Dorsolateral prefrontal cortex (tissue), 120 donors: ENCODE measurements at regions of chr6 and their contacts with region 1.

Region 1: GRCh38 chr6:30102970-30103874 is 9.7 kb downstream of the TRIM31 start:
- DNase-seq: peak; percentile 72 to 91 (median 82)
- H3K4me3 ChIP-seq: peak overlapping the region; percentile 14 to 70 (median 44)
- H3K27ac ChIP-seq: peak overlapping the region in 33 of 59 donors; percentile 8 to 70 (median 50)
- H3K27me3 ChIP-seq: peaks cover 3 to 91% (median 55%) of the 10 kb centered on the region in 45 donors
- CTCF ChIP-seq: peak; percentile 47 to 94 (median 88)

Region 2: DNA sequence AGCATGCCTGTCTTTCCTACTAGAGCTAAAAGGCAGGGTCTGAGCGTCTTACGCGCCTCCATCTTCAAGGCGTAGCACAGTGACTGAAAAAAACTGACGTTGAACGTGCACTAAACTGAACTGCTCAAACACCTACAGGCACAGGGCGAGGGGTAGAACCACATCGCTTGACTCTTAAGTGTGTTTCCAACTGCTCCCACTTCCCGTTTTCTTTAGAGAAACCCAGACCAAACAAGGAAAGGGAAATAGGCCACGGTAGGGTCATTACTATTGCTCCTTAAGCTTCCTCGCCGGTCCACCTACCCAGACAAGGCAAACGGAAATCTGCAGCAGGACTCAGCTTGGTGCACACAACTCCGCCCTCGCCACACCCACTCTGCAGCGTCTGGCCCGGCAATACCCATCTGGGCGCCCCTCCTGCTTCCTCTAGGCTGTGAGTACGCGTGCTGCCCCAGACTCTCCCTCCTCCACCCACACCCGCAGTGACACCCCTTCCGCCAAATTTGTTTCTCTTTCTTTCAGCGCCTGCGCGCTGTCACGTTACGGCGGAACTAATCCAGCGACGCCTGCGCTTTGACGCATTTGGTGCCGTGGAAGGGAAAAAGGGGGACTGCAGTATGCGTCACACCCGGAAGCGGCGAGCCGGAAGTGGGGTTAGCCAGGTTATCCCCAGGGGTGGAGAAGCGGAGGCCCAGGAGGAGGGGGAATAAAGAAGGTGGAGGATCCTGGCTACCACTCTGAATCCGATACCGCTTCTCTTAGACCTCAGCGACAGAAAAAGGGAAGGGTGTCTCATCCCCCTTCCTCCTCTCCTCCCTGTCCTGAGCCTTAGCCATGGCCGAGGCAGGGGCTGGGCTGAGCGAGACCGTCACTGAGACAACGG is 36.4 kb before region 1 on chr6 and contains the start of gene PPP1R11:
- intact Hi-C with region 1: loop called in 1 of 2 experiments (anchors 2 kb)
- DNase-seq: peak; percentile 97 to 99 (median 98)
- H3K4me3 ChIP-seq: peak within 1 kb of the TSS; percentile 53 to 98 (median 82)
- H3K27ac ChIP-seq: peak within 1 kb of the TSS; percentile 69 to 95 (median 90)
- H3K27me3 ChIP-seq: peaks cover 0 to 14% (median 0%) of the 10 kb centered on the region in 45 donors
- CTCF ChIP-seq: peak in 24 of 56 donors; percentile 0 to 55 (median 26)
- total RNA-seq, gene PPP1R11: 44.4 to 86.3 (median 63.9) TPM

Region 3: DNA sequence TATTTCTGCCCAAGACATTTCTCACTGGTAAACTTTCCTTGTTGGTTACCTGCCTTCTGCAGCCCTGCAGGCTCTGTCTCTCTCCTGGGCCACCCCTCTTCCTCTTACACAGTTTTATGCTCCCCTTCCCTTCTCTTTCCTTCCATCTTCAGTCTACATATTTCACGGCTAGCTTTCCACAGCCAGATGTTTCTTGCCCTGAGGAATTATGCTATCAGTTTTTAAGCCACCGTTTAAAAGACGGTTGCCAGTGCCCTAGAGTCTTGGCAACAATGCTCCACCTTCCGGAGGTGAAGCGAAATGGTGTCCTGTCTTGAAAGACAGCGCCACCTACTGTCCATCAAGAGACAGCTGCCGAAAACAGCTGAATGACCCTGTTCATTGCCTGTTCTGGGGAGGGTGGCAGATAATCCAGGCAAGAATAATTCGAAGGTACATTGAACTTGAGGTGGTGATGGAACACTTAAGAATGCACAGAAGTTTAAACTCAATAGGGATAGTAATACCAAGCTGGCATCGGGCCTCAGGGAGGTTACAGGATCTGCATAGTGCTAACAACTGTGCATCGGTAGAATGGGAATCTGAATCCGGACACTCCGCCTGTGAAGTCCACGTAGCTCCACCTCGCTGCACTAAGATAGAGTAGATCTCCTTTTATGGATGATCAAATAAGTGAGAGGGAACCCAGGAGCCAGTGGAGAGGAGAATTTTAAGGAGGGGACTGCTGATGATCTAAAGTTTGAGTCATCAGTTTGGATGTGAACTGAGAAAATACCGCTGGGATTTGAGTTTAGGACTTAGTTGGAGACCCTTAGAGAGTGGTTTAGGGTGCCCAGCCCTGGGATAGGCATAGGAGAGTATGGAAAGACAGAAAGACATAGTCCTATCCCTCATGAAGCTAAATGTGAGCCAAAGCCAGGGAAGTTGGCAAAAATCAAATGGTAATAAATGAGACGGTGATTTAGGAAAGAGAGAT is 28.0 kb after region 1 on chr6:
- intact Hi-C with region 1: loop called (anchors 1 kb)
- DNase-seq: peak in 8 of 10 donors; percentile 44 to 67 (median 54)
- H3K4me3 ChIP-seq: no peak overlapping the region
- H3K27ac ChIP-seq: no peak overlapping the region
- H3K27me3 ChIP-seq: peaks cover 0 to 90% (median 68%) of the 10 kb centered on the region in 45 donors
- CTCF ChIP-seq: peak; percentile 82 to 99 (median 97)

Region 4: GRCh38 chr6:30169658-30170614 is 66.7 kb after region 1 on chr6:
- intact Hi-C with region 1: loop called in 1 of 2 experiments (anchors 5 kb)
- DNase-seq: no peak
- H3K4me3 ChIP-seq: no peak overlapping the region
- H3K27ac ChIP-seq: no peak overlapping the region
- H3K27me3 ChIP-seq: peaks cover 2 to 88% (median 53%) of the 10 kb centered on the region in 45 donors
- CTCF ChIP-seq: peak in 55 of 56 donors; percentile 27 to 76 (median 66)

Region 5: DNA sequence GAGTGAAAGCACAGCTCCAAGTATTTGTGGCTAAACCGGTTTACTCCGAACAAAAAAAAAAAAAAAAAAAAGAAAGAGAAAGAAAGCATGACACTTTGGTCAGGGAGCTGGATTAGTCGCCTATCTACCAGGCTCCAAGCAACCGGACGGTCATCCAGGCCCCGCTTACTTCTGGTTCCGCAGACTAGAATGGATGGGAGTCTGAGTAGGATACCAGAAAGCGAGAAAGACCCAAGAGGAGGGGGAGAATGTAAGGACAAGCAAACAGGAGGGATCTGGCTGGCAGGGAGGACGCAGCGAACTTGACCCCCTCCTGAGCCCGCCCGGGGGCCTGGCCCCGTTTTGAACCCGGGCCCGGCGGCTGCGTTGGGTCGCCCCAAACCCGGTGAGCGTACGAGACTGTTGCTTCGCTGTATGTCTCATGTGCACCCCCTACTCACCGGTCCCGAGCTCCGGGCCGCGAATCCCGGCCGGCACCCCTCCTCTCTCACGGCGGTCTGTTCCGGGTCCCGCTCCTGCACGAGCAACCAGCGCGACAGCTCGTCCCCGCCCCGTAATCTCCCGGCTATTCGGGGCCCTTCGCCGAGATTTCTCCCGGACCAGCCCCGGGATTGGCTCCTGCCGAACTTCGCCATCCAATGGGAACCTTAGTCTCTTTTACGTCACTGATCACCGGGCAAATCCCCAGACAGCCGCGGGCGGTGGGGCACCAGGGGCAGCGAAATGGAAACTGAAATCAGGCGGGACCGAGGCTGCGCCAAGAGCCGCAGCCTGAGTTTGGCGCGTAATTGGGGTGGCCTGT is 109.8 kb after region 1 on chr6 and contains the start of gene TRIM26:
- intact Hi-C with region 1: loop called in 1 of 2 experiments (anchors 2 kb)
- DNase-seq: peak; percentile 92 to 98 (median 96)
- H3K4me3 ChIP-seq: peak within 1 kb of the TSS; percentile 62 to 100 (median 93)
- H3K27ac ChIP-seq: peak within 1 kb of the TSS; percentile 86 to 99 (median 96)
- H3K27me3 ChIP-seq: no peaks in the 10 kb centered on the region
- CTCF ChIP-seq: peak in 9 of 56 donors; percentile 4 to 29 (median 9)
- total RNA-seq, gene TRIM26: 22.4 to 51.1 (median 31.6) TPM

Region 6: DNA sequence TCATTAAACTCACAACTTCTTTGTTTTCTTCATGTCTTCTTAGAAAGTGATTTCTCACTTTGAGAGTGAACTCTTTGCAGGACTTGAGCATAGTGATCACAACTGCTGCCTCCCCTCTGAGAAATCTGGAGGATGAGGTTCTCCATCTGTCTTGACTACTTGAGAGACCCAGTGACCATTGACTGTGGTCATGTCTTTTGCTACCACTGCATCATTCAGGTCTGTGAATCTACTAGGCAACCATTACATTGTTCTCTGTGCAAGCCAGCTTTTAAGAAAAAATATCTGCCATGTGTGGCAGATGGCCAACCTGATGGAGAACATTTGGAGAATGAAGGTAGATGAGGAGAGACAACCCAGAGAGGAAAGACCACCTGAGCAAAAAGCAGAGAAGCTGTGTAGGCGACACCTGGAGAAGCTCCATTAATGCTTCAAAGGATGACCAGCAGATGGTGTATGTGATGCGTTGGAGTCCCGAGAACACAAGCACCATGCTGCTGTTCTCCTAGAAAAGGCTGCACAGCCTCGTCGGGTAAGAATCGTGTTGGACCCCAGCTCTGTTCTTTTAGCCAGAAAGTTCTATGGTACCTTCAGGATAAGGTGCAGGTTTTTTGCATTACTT is 135.1 kb after region 1 on chr6:
- intact Hi-C with region 1: no loop called
- DNase-seq: no peak
- H3K4me3 ChIP-seq: no peak overlapping the region
- H3K27ac ChIP-seq: no peak overlapping the region
- H3K27me3 ChIP-seq: no peaks in the 10 kb centered on the region
- CTCF ChIP-seq: peak in 27 of 56 donors; percentile 9 to 44 (median 21)